ENCODE measurements at regions of chr1 and their contacts with region 1.

Region 1: DNA sequence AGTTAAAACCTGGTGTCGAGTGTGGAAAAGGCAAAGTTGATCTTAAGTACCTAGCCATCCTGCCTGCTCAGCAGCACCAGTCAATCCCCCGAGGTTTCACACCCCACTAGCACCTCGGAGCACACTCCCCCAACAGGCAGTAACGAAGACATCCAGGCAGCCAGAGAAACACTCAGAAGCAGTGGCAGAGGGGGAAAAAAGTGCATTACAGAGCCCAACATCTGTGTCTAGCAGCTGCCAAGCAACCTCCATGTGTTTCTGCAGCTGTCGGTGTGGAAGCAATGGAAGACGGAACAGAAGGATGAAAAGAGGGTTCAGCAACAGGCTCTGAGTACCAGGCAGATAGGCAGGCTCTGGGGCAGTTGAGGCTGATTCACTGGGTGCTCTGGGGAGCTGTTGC is 73.4 kb upstream of the PROX1 start:
- DNase-seq: no peak
- H3K4me3 Mint-ChIP-seq: no peak overlapping the region
- H3K27ac Mint-ChIP-seq: no peak overlapping the region
- H3K4me1 Mint-ChIP-seq: no peaks in the 10 kb centered on the region
- H3K27me3 Mint-ChIP-seq: peaks cover 88% of the 10 kb centered on the region
- CTCF ChIP-seq: no peak

Region 2: GRCh38 chr1:213936571-213936970 is 22.2 kb after region 1 on chr1:
- CTCF ChIA-PET with region 1: no interaction called
- intact Hi-C with region 1: loop called (anchors 2 kb)
- DNase-seq: no peak
- H3K4me3 Mint-ChIP-seq: no peak overlapping the region
- H3K27ac Mint-ChIP-seq: no peak overlapping the region
- H3K4me1 Mint-ChIP-seq: no peaks in the 10 kb centered on the region
- H3K27me3 Mint-ChIP-seq: peaks cover 77% of the 10 kb centered on the region
- CTCF ChIP-seq: no peak

Measured in Calu3 (cell line).